Activated CD4-positive, alpha-beta T cell treated with anti-CD3 and anti-CD28 coated beads for 36 hours (primary cell): ENCODE measurements at regions of chr2 and their contacts with region 1.

Region 1: DNA sequence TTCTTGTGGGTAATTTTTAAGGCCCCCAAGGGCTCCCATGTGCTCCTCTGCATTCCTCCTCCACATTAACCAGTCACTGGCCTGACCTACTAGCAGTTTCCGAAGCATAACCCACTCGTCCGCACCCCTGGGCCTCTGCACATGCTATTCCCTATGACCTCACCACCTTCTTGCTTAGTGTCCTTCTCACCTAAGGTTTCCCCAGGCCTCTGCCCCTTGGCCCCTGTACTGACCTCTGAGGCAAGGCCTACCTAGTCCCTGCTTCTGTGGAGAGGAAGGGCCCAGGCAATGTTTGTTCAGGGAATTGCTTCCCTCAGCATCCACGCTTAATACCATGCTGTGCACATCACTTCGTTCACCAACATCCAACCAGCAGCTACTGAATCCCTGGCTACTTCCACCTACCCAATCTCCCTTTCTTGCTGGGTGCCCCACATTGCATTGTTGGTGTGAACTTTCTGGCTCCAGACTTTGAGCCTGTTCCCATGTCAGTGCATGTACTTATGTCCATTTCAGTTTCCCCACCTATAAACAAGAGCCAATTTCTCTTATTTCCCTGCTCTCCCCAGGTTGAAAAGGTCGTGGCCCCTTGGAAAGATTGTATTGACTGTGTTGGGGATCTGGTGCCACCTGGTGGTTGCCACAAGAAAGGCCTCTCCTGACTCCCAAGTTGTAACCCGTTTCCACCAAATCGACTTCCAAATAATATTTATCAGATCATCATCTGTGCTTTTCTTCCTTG is 19.2 kb upstream of the TMEM177 start:
- DNase-seq: peak; percentile 71
- ATAC-seq: no peak
- H3K4me3 Mint-ChIP-seq: no peak overlapping the region
- H3K27ac Mint-ChIP-seq: no peak overlapping the region
- H3K4me1 Mint-ChIP-seq: no peaks in the 10 kb centered on the region
- H3K27me3 Mint-ChIP-seq: peaks cover 5% of the 10 kb centered on the region

Region 2: DNA sequence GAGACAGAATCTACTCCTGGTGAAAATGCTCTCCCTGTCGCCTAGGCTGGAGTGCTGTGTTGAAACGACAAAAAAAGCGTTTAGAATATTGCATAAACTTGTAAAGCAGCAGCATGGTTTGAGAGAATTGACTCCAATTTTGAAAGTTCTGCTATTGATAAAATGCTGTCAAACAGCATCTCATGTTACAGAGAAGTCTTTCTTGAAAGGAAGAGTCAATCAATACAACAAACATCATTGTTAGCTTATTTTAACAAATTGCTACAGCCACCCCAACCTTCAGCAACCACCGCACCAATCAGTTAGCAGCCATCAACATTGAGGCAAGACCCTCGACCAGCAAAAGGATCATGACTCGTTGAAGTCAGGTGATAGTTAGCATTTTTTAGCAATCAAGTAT is 300.0 kb before region 1 on chr2:
- CTCF ChIA-PET with region 1: no interaction called
- POLR2A ChIA-PET with region 1: no interaction called
- intact Hi-C with region 1: no loop called
- DNase-seq: no peak
- ATAC-seq: no peak
- H3K4me3 Mint-ChIP-seq: no peak overlapping the region
- H3K27ac Mint-ChIP-seq: no peak overlapping the region
- H3K4me1 Mint-ChIP-seq: peaks cover 8% of the 10 kb centered on the region
- H3K27me3 Mint-ChIP-seq: no peaks in the 10 kb centered on the region

Region 3: GRCh38 chr2:119407430-119408220 is 252.1 kb before region 1 on chr2:
- CTCF ChIA-PET with region 1: interaction called, 3 read pairs
- POLR2A ChIA-PET with region 1: no interaction called
- intact Hi-C with region 1: loop called (anchors 1 to 10 kb)
- DNase-seq: peak; percentile 56
- ATAC-seq: peak; percentile 42
- H3K4me3 Mint-ChIP-seq: no peak overlapping the region
- H3K27ac Mint-ChIP-seq: no peak overlapping the region
- H3K4me1 Mint-ChIP-seq: no peaks in the 10 kb centered on the region
- H3K27me3 Mint-ChIP-seq: peaks cover 2% of the 10 kb centered on the region

Region 4: GRCh38 chr2:119517433-119517832 is 142.3 kb before region 1 on chr2:
- CTCF ChIA-PET with region 1: no interaction called
- POLR2A ChIA-PET with region 1: no interaction called
- intact Hi-C with region 1: loop called in 1 of 2 experiments (anchors 1 kb)
- DNase-seq: peak; percentile 72
- ATAC-seq: no peak
- H3K4me3 Mint-ChIP-seq: no peak overlapping the region
- H3K27ac Mint-ChIP-seq: no peak overlapping the region
- H3K4me1 Mint-ChIP-seq: no peaks in the 10 kb centered on the region
- H3K27me3 Mint-ChIP-seq: peaks cover 25% of the 10 kb centered on the region

Region 5: DNA sequence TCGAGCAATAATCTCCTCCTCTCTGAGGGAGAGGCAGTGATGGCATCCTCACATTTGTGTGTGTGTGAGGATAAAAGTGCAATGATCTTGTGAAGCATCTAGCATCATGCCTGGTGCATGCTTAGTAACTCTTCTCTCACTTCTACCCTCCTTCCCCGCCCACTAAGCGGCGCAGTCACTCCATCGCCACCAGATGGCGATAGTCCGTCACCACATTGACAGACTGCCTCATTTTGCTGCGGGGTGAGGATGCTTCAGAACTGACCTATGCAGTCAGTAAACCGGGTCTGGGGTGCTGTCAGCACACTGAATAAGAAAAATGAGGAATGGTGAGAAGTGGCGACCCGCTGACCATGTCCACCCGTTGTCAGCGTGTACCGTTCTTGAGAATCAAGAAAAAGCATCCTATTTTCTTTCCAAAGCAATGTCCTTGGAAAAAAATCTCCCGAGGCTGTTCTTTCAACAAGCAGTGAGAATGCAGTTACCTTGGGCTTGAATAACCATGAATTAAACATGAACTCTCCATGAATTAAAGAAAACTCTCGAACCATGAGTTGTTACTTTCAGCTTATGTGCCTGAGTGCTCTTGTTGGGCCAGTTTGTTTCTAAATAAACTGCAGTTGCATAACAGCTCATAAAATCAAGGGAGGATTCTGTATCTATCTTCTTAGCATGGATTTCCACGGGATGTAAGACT is 18.1 kb before region 1 on chr2:
- CTCF ChIA-PET with region 1: interaction called, 30 read pairs
- POLR2A ChIA-PET with region 1: no interaction called
- intact Hi-C with region 1: loop called (anchors 1 kb)
- DNase-seq: peak; percentile 87
- ATAC-seq: peak; percentile 99
- H3K4me3 Mint-ChIP-seq: no peak overlapping the region
- H3K27ac Mint-ChIP-seq: no peak overlapping the region
- H3K4me1 Mint-ChIP-seq: peaks cover 2% of the 10 kb centered on the region
- H3K27me3 Mint-ChIP-seq: no peaks in the 10 kb centered on the region

Region 6: GRCh38 chr2:119647440-119648169 is 12.2 kb before region 1 on chr2:
- CTCF ChIA-PET with region 1: interaction called, 30 read pairs
- POLR2A ChIA-PET with region 1: no interaction called
- intact Hi-C with region 1: no loop called
- DNase-seq: no peak
- ATAC-seq: no peak
- H3K4me3 Mint-ChIP-seq: no peak overlapping the region
- H3K27ac Mint-ChIP-seq: no peak overlapping the region
- H3K4me1 Mint-ChIP-seq: no peaks in the 10 kb centered on the region
- H3K27me3 Mint-ChIP-seq: peaks cover 8% of the 10 kb centered on the region